Activated CD4-positive, alpha-beta memory T cell treated with anti-CD3 and anti-CD28 coated beads, Interleukin-2, amount 10 ng/mL, durations not matched to agents 7 days and 5 days (primary cell): ENCODE measurements at regions of chr3 and their contacts with region 1.

Region 1: DNA sequence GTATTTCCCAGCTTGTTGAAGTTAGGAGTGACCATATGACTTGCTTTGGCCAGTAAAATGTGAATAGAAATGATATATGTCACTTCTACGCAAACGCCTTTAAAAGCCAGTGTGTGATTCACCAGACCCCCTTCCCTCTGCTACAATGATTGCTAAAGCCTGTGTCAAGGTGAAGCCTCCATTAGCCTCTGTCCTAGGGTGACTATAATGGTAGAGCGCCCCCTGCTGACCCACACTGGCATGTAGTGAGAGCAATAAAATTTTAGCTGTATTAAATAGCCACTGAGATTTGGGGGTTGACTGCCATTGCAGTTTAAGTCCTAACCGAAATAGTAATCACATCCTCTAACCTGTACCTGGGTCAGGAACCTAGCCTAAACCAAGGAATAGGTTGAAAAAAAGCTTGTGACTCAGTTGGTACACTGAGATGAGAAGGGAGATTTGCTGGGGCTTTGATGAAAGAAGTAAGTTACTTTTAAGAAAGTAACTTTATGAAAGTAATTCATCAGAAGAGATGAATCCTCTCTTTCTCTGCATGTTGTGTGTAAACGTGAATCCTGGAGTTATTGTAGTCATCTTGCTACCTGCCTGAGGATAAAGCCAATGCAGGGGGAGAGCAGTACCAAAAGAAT is 52.6 kb downstream of the GTF2E1 start:
- DNase-seq: peak; percentile 85
- H3K4me3 Mint-ChIP-seq: no peak overlapping the region
- H3K27ac Mint-ChIP-seq: no peak overlapping the region
- H3K4me1 Mint-ChIP-seq: no peaks in the 10 kb centered on the region
- H3K27me3 Mint-ChIP-seq: no peaks in the 10 kb centered on the region

Region 2: GRCh38 chr3:120558771-120559241 is 236.3 kb before region 1 on chr3:
- CTCF ChIA-PET with region 1: interaction called, 32 read pairs
- POLR2A ChIA-PET with region 1: no interaction called
- DNase-seq: peak; percentile 88
- H3K4me3 Mint-ChIP-seq: peak overlapping the region; percentile 74
- H3K27ac Mint-ChIP-seq: no peak overlapping the region
- H3K4me1 Mint-ChIP-seq: peaks cover 13% of the 10 kb centered on the region
- H3K27me3 Mint-ChIP-seq: peaks cover 2% of the 10 kb centered on the region

Region 3: DNA sequence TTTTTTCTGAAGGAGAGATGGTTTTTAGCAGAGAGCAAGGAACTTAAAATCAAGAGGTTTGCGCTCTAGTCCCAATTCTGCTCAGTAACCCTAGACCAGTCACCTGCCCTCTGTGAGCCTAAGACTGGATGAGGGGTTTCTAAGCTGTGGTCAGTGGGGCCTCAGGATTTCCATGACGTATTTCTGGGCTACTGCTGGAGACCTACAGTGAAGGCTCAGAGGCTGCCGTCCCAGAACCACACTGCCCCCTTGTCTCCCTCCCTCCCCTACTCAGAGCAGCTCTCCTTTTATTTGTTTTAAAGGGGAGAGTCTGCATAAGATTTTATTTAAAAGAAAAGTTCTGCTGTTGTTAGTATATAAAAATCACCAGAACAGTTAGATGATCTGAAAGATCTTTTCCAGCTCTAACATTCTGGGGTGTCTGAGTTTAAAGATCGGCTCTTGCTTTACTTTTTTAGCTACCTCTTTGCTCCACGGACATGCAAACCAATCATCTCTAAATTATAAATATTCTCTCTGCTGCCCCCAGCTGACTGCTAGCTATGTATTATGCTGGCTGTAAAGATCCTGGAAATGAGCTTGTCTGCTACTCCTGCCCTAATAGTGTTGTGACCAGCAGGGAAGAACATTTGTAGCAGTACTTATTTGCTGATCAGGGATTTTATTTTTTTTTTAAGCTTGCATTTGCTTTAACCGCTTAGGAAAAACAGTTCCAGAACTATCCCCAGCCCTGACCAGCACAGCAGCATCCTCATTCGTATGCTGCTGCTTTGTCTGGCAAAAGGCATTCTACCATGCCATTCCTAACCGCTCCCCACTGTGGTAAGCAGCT is 227.5 kb before region 1 on chr3:
- CTCF ChIA-PET with region 1: interaction called, 32 read pairs
- POLR2A ChIA-PET with region 1: interaction called, 3 read pairs
- DNase-seq: no peak
- H3K4me3 Mint-ChIP-seq: no peak overlapping the region
- H3K27ac Mint-ChIP-seq: no peak overlapping the region
- H3K4me1 Mint-ChIP-seq: no peaks in the 10 kb centered on the region
- H3K27me3 Mint-ChIP-seq: peaks cover 8% of the 10 kb centered on the region

Region 4: GRCh38 chr3:120622870-120623731 is 172.0 kb before region 1 on chr3:
- CTCF ChIA-PET with region 1: interaction called, 10 read pairs
- POLR2A ChIA-PET with region 1: no interaction called
- DNase-seq: peak; percentile 33
- H3K4me3 Mint-ChIP-seq: no peak overlapping the region
- H3K27ac Mint-ChIP-seq: no peak overlapping the region
- H3K4me1 Mint-ChIP-seq: no peaks in the 10 kb centered on the region
- H3K27me3 Mint-ChIP-seq: no peaks in the 10 kb centered on the region

Region 5: DNA sequence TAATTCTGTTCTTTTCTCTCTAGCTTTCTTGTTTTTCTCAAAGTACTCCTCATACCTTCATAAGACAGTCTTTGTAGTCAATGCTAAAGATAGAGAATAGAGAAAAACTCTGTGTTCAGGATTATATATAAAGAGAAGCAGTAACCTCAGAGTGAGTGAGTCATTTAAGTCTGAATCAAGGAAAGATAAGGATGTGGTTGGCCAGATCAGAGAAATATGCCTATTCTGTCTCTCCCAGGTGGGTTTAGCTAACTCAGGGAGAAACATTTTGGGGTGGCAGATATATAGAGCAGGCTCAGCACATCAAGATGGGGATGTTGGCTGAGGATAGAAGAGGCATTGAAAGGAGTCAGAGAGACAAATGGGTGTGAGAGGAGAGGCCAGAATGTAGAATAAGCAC is 21.2 kb before region 1 on chr3:
- CTCF ChIA-PET with region 1: interaction called, 12 read pairs
- POLR2A ChIA-PET with region 1: no interaction called
- DNase-seq: no peak
- H3K4me3 Mint-ChIP-seq: no peak overlapping the region
- H3K27ac Mint-ChIP-seq: no peak overlapping the region
- H3K4me1 Mint-ChIP-seq: peaks cover 10% of the 10 kb centered on the region
- H3K27me3 Mint-ChIP-seq: no peaks in the 10 kb centered on the region

Region 6: GRCh38 chr3:120780977-120781376 is 14.2 kb before region 1 on chr3:
- CTCF ChIA-PET with region 1: interaction called, 10 read pairs
- POLR2A ChIA-PET with region 1: no interaction called
- DNase-seq: no peak
- H3K4me3 Mint-ChIP-seq: no peak overlapping the region
- H3K27ac Mint-ChIP-seq: no peak overlapping the region
- H3K4me1 Mint-ChIP-seq: peaks cover 10% of the 10 kb centered on the region
- H3K27me3 Mint-ChIP-seq: no peaks in the 10 kb centered on the region